Naive thymus-derived CD4-positive, alpha-beta T cell (primary cell): ENCODE measurements at regions of chr5 and their contacts with region 1.

Region 1: GRCh38 chr5:55994574-55995333 is at the start of gene IL6ST:
- DNase-seq: peak; percentile 93 to 99 (median 95)
- ATAC-seq: peak; percentile 96
- H3K4me3 ChIP-seq: peak within 1 kb of the TSS; percentile 94
- H3K4me3 Mint-ChIP-seq: peak within 1 kb of the TSS; percentile 88 to 99 (median 96)
- H3K27ac ChIP-seq: peak within 1 kb of the TSS; percentile 99
- H3K27ac Mint-ChIP-seq: peak within 1 kb of the TSS; percentile 95 to 100 (median 98)
- H3K4me1 ChIP-seq: peaks cover 10 to 12% of the 10 kb centered on the region in 2 donors
- H3K4me1 Mint-ChIP-seq: peaks cover 28 to 59% (median 50%) of the 10 kb centered on the region in 7 donors
- H3K27me3 ChIP-seq: no peaks in the 10 kb centered on the region
- H3K27me3 Mint-ChIP-seq: no peaks in the 10 kb centered on the region
- total RNA-seq, gene IL6ST: 101 to 372 (median 346) TPM

Region 2: GRCh38 chr5:54807421-54807820 is 1187.3 kb before region 1 on chr5:
- CTCF ChIA-PET with region 1: no interaction called
- POLR2A ChIA-PET with region 1: no interaction called
- intact Hi-C with region 1: no loop called
- DNase-seq: no peak
- ATAC-seq: no peak
- H3K4me3 ChIP-seq: no peak overlapping the region
- H3K4me3 Mint-ChIP-seq: no peak overlapping the region
- H3K27ac ChIP-seq: no peak overlapping the region
- H3K27ac Mint-ChIP-seq: no peak overlapping the region
- H3K4me1 ChIP-seq: no peaks in the 10 kb centered on the region
- H3K4me1 Mint-ChIP-seq: peaks cover 0 to 2% (median 0%) of the 10 kb centered on the region in 7 donors
- H3K27me3 ChIP-seq: no peaks in the 10 kb centered on the region
- H3K27me3 Mint-ChIP-seq: peaks cover 0 to 15% (median 0%) of the 10 kb centered on the region in 5 donors

Region 3: DNA sequence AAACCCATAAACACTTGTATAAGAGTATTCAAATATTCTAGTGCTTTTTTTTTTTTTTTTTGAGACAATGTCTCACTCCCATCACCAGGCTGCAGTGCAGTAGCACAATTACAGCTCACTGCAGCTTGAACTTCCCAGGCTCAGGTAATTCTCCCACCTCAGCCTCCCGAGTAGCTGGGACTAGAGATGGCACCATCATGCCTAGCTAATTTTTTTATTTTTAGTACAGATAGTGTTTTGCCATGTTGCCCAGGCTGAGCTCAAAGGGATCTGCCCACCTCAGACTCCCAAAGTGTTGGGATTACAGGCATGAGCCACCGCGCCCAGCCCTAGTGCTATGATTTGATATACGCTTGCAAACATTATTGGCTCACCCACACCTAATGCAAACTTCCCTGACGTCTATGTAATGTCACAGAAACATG is 11.8 kb before region 1 on chr5:
- CTCF ChIA-PET with region 1: interaction called, 5 read pairs
- POLR2A ChIA-PET with region 1: interaction called, 18 read pairs
- intact Hi-C with region 1: loop called (anchors 1 kb)
- DNase-seq: peak in 7 of 9 donors; percentile 42 to 63 (median 53)
- ATAC-seq: peak; percentile 46
- H3K4me3 ChIP-seq: peak overlapping the region; percentile 44
- H3K4me3 Mint-ChIP-seq: peak overlapping the region; percentile 48 to 96 (median 84)
- H3K27ac ChIP-seq: peak overlapping the region; percentile 67
- H3K27ac Mint-ChIP-seq: peak overlapping the region; percentile 24 to 98 (median 85)
- H3K4me1 ChIP-seq: peaks cover 0 to 63% of the 10 kb centered on the region in 2 donors
- H3K4me1 Mint-ChIP-seq: peaks cover 37 to 94% (median 84%) of the 10 kb centered on the region in 7 donors
- H3K27me3 ChIP-seq: no peaks in the 10 kb centered on the region
- H3K27me3 Mint-ChIP-seq: no peaks in the 10 kb centered on the region

Region 4: GRCh38 chr5:56050551-56051255 is 55.9 kb after region 1 on chr5:
- CTCF ChIA-PET with region 1: interaction called, 5 read pairs
- POLR2A ChIA-PET with region 1: interaction called, 97 read pairs
- intact Hi-C with region 1: loop called (anchors 1 kb)
- DNase-seq: peak in 8 of 9 donors; percentile 4 to 77 (median 66)
- ATAC-seq: peak; percentile 71
- H3K4me3 ChIP-seq: peak overlapping the region; percentile 34
- H3K4me3 Mint-ChIP-seq: peak overlapping the region; percentile 60 to 92 (median 76)
- H3K27ac ChIP-seq: peak overlapping the region; percentile 62
- H3K27ac Mint-ChIP-seq: peak overlapping the region; percentile 77 to 95 (median 89)
- H3K4me1 ChIP-seq: peaks cover 11 to 76% of the 10 kb centered on the region in 2 donors
- H3K4me1 Mint-ChIP-seq: peaks cover 40 to 95% (median 74%) of the 10 kb centered on the region in 7 donors
- H3K27me3 ChIP-seq: no peaks in the 10 kb centered on the region
- H3K27me3 Mint-ChIP-seq: peaks cover 0 to 5% (median 0%) of the 10 kb centered on the region in 5 donors

Region 5: DNA sequence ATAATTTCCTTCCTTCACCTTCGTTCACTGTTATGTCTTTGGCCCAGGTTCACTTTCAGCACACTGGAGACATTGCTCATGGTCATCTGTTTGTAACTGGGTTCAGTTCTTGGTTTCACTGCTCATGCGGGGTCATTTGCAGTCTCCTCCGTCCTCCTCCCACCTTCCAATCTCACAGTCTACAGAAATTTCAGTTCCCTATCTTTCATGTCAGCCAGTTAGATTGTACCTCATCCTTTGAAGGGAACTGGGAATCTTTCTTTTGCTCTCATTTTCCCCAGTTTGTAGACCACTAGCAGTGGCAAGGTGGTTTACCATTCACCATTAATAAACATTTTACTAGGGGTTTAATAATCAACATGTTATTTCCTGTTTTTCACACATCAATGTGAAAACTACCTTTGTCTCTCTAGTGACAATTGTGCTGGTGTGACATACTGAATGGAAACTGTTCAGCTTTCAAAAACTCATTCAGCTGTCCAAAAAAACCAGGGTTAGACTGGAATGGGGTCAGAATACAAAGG is 100.9 kb after region 1 on chr5:
- CTCF ChIA-PET with region 1: interaction called, 5 read pairs
- POLR2A ChIA-PET with region 1: interaction called, 20 read pairs
- intact Hi-C with region 1: no loop called
- DNase-seq: no peak
- ATAC-seq: no peak
- H3K4me3 ChIP-seq: no peak overlapping the region
- H3K4me3 Mint-ChIP-seq: peak overlapping the region in 9 of 10 donors; percentile 32 to 77 (median 56)
- H3K27ac ChIP-seq: peak overlapping the region; percentile 54
- H3K27ac Mint-ChIP-seq: peak overlapping the region; percentile 66 to 100 (median 91)
- H3K4me1 ChIP-seq: peaks cover 0 to 94% of the 10 kb centered on the region in 2 donors
- H3K4me1 Mint-ChIP-seq: peaks cover 56 to 97% (median 86%) of the 10 kb centered on the region in 7 donors
- H3K27me3 ChIP-seq: no peaks in the 10 kb centered on the region
- H3K27me3 Mint-ChIP-seq: no peaks in the 10 kb centered on the region

Region 6: GRCh38 chr5:56148453-56148971 is 153.8 kb after region 1 on chr5:
- CTCF ChIA-PET with region 1: no interaction called
- POLR2A ChIA-PET with region 1: interaction called, 15 read pairs
- intact Hi-C with region 1: loop called (anchors 1 kb)
- DNase-seq: peak in 8 of 9 donors; percentile 52 to 84 (median 70)
- ATAC-seq: peak; percentile 87
- H3K4me3 ChIP-seq: peak overlapping the region; percentile 18
- H3K4me3 Mint-ChIP-seq: peak overlapping the region; percentile 45 to 74 (median 62)
- H3K27ac ChIP-seq: peak overlapping the region; percentile 61
- H3K27ac Mint-ChIP-seq: peak overlapping the region; percentile 87 to 97 (median 94)
- H3K4me1 ChIP-seq: peaks cover 0 to 76% of the 10 kb centered on the region in 2 donors
- H3K4me1 Mint-ChIP-seq: peaks cover 39 to 76% (median 70%) of the 10 kb centered on the region in 7 donors
- H3K27me3 ChIP-seq: no peaks in the 10 kb centered on the region
- H3K27me3 Mint-ChIP-seq: peaks cover 0 to 2% (median 0%) of the 10 kb centered on the region in 5 donors

Region 7: DNA sequence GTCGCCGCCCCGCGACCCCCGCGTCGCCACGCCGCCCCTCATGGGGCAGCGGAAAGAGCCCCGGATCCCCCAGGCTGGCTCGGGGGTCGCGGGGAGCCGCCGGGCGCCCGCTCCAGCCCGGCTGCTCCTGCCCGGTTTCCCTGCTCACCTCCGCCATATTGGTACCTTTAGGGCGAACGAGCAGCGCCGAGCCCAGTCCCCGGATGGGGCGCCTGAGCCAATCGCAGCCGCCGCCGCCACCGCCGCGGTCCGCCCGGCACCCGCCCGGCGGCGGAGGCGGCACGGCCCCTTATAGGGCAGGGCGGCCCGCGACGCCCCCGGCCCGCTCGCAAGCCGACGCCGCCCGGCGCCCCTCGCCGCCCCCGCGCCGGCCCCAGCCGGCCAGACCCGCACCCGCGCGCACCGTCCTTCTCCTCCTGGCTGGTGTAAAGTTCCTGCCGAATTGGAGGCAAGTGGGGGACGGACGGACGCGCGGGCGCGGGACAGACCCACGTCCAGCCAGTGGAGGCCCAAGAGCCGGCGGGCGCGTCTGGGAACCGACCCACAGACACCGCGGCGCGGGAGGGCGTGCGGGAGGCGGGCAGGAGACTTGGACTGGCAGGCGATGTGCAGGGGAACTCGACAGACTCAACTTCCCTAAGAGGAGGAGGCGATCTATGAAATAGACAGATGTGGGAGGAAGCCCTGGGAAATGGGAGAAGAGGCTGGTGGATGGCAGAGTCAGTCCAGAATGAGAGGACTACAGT is 957.4 kb after region 1 on chr5 and contains the start of gene MIER3:
- CTCF ChIA-PET with region 1: no interaction called
- POLR2A ChIA-PET with region 1: no interaction called
- intact Hi-C with region 1: loop called in 1 of 2 experiments (anchors 5 kb)
- DNase-seq: peak; percentile 66 to 87 (median 80)
- ATAC-seq: peak; percentile 94
- H3K4me3 ChIP-seq: peak within 1 kb of the TSS; percentile 75
- H3K4me3 Mint-ChIP-seq: peak within 1 kb of the TSS; percentile 89 to 98 (median 96)
- H3K27ac ChIP-seq: peak within 1 kb of the TSS; percentile 73
- H3K27ac Mint-ChIP-seq: peak within 1 kb of the TSS in 8 of 9 donors; percentile 84 to 95 (median 88)
- H3K4me1 ChIP-seq: peaks cover 6 to 10% of the 10 kb centered on the region in 2 donors
- H3K4me1 Mint-ChIP-seq: peaks cover 18 to 32% (median 22%) of the 10 kb centered on the region in 7 donors
- H3K27me3 ChIP-seq: peaks cover 0 to 5% of the 10 kb centered on the region in 2 donors
- H3K27me3 Mint-ChIP-seq: peaks cover 10 to 45% (median 24%) of the 10 kb centered on the region in 5 donors
- total RNA-seq, gene MIER3: 14.9 to 35.0 (median 26.2) TPM